ENCODE measurements at regions of chr4 and their contacts with region 1.

Region 1: GRCh38 chr4:25234390-25235370 is 847 bp downstream of the PI4K2B start:
- DNase-seq: peak; percentile 21 to 92 (median 42)

Region 2: DNA sequence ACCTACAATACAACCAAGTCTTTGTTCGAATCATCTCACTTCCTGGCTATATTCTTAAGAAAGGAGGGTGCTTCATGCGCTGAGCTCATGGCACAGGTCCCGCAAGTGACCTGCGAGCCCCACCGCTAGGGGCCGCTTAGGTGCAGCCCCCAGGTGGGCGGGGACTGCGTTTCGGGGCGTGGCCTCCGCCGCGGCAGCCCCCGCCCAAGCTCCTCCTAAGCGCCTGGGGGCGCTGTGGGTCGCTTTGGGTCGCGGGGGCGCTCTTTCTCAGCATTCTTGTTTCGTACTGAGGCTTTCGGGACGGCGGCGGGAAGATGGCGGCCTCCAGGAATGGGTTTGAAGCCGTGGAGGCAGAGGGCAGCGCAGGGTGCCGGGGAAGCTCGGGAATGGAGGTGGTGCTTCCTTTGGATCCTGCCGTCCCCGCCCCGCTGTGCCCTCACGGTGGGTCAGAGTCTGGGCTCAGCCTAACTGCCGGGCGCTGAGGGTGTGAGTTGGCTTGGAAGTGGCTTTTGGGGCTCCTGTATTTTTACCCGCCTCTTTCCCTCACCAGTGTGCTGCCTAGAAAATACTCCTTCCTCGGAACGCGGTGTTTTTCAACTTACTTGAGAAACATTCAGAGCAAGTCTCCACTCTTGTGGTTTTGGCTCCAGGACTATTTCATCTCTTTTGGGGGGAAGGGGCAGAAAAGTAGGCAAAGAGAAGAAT is 78.0 kb after region 1 on chr4 and contains the start of gene ZCCHC4:
- intact Hi-C with region 1: loop called (anchors 2 kb)
- DNase-seq: peak; percentile 84 to 98 (median 90)

Region 3: GRCh38 chr4:25367004-25367621 is 132.4 kb after region 1 on chr4:
- intact Hi-C with region 1: no loop called
- DNase-seq: no peak

Measured in posterior cingulate gyrus (tissue), 11 donors.